Activated CD4-positive, alpha-beta memory T cell treated with anti-CD3 and anti-CD28 coated beads, Interleukin-2, amount 10 ng/mL, durations not matched to agents 7 days and 5 days (primary cell): ENCODE measurements at regions of chr19 and their contacts with region 1.

Region 1: GRCh38 chr19:9621156-9622037 is at the start of gene ZNF561:
- DNase-seq: peak; percentile 89
- H3K4me3 Mint-ChIP-seq: peak within 1 kb of the TSS; percentile 91
- H3K27ac Mint-ChIP-seq: peak within 1 kb of the TSS; percentile 94
- H3K4me1 Mint-ChIP-seq: peaks cover 22% of the 10 kb centered on the region
- H3K27me3 Mint-ChIP-seq: no peaks in the 10 kb centered on the region
- total RNA-seq, gene ZNF561: 27.0 to 29.0 TPM

Region 2: GRCh38 chr19:9342610-9343304 is 278.6 kb before region 1 on chr19:
- CTCF ChIA-PET with region 1: no interaction called
- POLR2A ChIA-PET with region 1: no interaction called
- DNase-seq: no peak
- H3K4me3 Mint-ChIP-seq: no peak overlapping the region
- H3K27ac Mint-ChIP-seq: no peak overlapping the region
- H3K4me1 Mint-ChIP-seq: no peaks in the 10 kb centered on the region
- H3K27me3 Mint-ChIP-seq: no peaks in the 10 kb centered on the region

Region 3: DNA sequence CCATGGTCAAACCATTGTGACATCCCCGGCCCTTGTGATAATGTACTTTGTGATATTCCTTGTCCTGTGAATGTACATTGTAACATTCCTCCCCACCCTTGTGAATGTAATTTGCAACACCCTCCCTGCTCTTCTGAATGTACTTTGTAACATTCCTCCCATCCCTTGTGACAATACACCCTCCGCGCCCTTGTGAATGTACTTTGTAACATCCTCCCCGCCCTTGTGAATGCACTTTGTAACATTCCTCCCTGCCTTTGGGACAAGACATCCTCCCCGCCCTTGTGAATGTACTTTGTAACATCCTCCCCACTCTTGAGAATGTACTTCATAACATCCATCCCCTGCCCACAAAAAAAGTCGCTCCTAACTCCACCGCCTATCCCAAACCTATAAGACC is 130.0 kb after region 1 on chr19:
- CTCF ChIA-PET with region 1: no interaction called
- POLR2A ChIA-PET with region 1: no interaction called
- DNase-seq: no peak
- H3K4me3 Mint-ChIP-seq: no peak overlapping the region
- H3K27ac Mint-ChIP-seq: no peak overlapping the region
- H3K4me1 Mint-ChIP-seq: no peaks in the 10 kb centered on the region
- H3K27me3 Mint-ChIP-seq: no peaks in the 10 kb centered on the region

Region 4: GRCh38 chr19:9796113-9796773 is 174.8 kb after region 1 on chr19:
- CTCF ChIA-PET with region 1: interaction called, 11 read pairs
- POLR2A ChIA-PET with region 1: interaction called, 3 read pairs
- DNase-seq: peak; percentile 90
- H3K4me3 Mint-ChIP-seq: no peak overlapping the region
- H3K27ac Mint-ChIP-seq: peak overlapping the region; percentile 74
- H3K4me1 Mint-ChIP-seq: peaks cover 32% of the 10 kb centered on the region
- H3K27me3 Mint-ChIP-seq: no peaks in the 10 kb centered on the region